PC-9 (cell line): ENCODE measurements at regions of chrX and their contacts with region 1.

Region 1: GRCh38 chrX:147803948-147804347 is 107.8 kb upstream of the FMR1 start:
- DNase-seq: no peak
- H3K4me3 ChIP-seq: no peak overlapping the region
- H3K27ac ChIP-seq: no peak overlapping the region
- H3K4me1 ChIP-seq: no peaks in the 10 kb centered on the region
- H3K27me3 ChIP-seq: no peaks in the 10 kb centered on the region
- CTCF ChIP-seq: peak; percentile 73

Region 2: DNA sequence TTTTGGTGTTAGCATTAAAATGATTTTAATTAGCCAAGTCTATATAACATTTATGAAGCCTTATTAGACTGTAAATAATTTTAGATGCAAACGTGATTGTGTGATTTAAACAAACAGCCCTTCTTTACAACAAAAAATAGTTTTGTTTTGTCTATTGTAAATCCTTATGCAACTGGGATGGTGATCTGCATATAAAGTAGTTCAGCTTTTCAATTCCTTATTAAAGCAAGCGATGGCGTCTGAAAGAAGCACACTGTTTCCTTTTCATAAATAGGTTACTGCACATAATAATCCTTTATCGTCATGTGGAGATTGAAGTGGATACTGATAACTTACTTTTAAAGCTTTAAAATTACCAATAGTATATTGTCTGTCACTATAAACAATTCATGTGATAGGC is 1977.5 kb before region 1 on chrX:
- CTCF ChIA-PET with region 1: no interaction called
- POLR2A ChIA-PET with region 1: interaction called, 10 read pairs
- intact Hi-C with region 1: no loop called
- DNase-seq: no peak
- H3K4me3 ChIP-seq: no peak overlapping the region
- H3K27ac ChIP-seq: no peak overlapping the region
- H3K4me1 ChIP-seq: no peaks in the 10 kb centered on the region
- H3K27me3 ChIP-seq: peaks cover 39% of the 10 kb centered on the region
- CTCF ChIP-seq: no peak

Region 3: DNA sequence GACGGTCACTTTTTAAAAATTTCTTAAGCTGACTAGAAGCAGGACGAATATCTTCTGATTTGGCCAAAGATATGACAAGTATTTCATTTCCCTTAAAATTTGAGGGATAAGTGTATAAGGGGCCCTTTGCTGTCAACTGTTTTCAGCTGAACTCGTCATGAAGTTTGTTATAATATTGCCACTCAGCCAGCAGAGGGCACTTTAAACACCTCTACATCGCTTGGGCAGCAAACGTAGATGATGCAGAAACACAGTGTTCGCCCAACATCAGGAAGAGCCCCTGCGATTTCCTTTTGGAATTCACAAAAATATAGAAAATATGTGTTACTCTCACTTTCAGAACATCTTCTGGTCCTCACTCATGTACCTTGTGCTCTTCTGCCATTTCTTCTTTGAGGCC is 327.9 kb before region 1 on chrX:
- CTCF ChIA-PET with region 1: no interaction called
- POLR2A ChIA-PET with region 1: no interaction called
- intact Hi-C with region 1: loop called (anchors 5 kb)
- DNase-seq: no peak
- H3K4me3 ChIP-seq: no peak overlapping the region
- H3K27ac ChIP-seq: no peak overlapping the region
- H3K4me1 ChIP-seq: no peaks in the 10 kb centered on the region
- H3K27me3 ChIP-seq: no peaks in the 10 kb centered on the region
- CTCF ChIP-seq: peak; percentile 65

Region 4: DNA sequence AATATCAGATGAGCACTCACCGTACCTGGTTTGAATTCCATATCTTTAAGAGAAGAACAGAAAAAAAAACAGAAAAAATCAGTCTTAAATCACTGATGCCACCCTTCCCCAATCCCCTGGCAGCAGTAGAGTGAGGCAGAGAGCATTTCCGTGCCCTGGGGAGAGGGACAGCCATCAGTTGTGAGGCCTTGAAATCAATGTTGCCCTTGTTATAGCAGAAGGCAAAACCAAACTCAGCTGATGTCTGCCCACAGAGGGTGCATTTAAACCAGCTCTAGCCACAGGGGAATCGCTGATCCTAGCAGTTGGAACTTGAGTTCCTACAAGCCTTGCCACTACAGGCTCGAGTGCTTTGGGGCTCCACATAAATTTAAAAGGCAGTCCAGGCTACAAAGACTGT is 230.7 kb before region 1 on chrX:
- CTCF ChIA-PET with region 1: no interaction called
- POLR2A ChIA-PET with region 1: no interaction called
- intact Hi-C with region 1: no loop called
- DNase-seq: no peak
- H3K4me3 ChIP-seq: no peak overlapping the region
- H3K27ac ChIP-seq: no peak overlapping the region
- H3K4me1 ChIP-seq: no peaks in the 10 kb centered on the region
- H3K27me3 ChIP-seq: no peaks in the 10 kb centered on the region
- CTCF ChIP-seq: no peak